ENCODE measurements at regions of chr3 and their contacts with region 1.

Region 1: DNA sequence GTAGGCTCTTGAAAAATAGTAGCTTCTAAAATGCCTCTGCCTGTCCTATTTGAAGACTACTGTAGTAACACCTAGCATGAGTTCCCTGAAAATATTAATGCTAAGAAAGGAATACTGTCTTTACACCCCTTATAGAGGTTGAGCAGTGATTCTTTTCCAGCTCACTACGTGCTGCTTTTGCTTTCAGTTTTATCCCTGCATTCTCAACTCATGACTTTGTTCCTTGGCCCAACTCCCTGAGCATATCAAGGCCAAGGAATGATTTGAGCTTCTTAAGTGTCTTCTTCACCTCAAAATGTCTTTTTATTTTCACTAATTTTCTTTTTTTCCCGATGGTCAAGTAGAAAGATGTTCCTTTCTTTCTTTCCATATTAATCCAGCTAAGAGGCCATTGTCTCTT is 16.5 kb upstream of the P2RY13 start:
- DNase-seq: no peak
- H3K4me3 ChIP-seq: peak overlapping the region in 1 of 2 experiments; percentile 23; a peak in 2 of 4 replicates
- H3K27ac ChIP-seq: no peak overlapping the region
- H3K4me1 ChIP-seq: peaks cover 0 to 2% of the 10 kb centered on the region in 2 experiments; a peak in 2 of 4 replicates
- H3K27me3 ChIP-seq: peaks cover 9% of the 10 kb centered on the region; the same call in 1 of the 2 replicates
- CTCF ChIP-seq: no peak
- EP300 ChIP-seq: no peak
- RAD21 ChIP-seq: no peak

Region 2: DNA sequence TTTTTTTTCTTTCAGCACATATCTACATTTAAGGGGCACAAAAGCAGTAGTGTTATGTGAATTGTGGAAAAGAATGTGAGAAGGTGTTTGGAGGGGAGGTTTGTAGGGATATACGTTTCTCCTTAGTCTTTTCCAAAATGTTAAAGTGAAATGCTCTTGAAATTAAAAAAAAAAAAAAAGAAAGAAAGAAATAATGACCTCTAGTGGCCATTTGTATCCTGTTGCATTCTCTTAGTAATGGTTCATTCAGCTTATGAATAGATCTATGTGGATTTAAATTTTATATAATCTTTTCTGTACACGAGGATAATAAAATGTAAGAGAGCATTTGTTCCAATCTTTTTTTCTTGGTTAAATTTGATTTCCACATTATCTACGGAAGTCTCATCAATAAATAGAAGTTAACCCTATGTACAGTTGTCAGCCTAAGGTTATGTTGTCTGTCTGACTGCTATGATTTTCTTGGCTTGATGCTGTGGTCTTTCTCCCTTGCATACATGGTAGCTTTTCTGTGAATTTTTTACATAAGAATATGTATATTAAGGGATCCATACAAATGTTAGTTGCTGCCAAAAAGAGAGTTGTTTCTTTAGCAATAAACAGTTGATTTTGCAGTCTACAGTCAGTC is 18.2 kb before region 1 on chr3:
- CTCF ChIA-PET with region 1: interaction called, 16 read pairs
- POLR2A ChIA-PET with region 1: no interaction called
- DNase-seq: peak; percentile 7
- H3K4me3 ChIP-seq: peak overlapping the region in 1 of 2 experiments; percentile 21; a peak in 1 of 4 replicates
- H3K27ac ChIP-seq: no peak overlapping the region
- H3K4me1 ChIP-seq: no peaks in the 10 kb centered on the region
- H3K27me3 ChIP-seq: peaks cover 6% of the 10 kb centered on the region; the same call in 1 of the 2 replicates
- CTCF ChIP-seq: peak; percentile 86
- EP300 ChIP-seq: no peak
- RAD21 ChIP-seq: peak; percentile 25

Region 3: GRCh38 chr3:151379083-151379734 is 33.4 kb after region 1 on chr3:
- CTCF ChIA-PET with region 1: no interaction called
- POLR2A ChIA-PET with region 1: no interaction called
- DNase-seq: peak; percentile 8
- H3K4me3 ChIP-seq: no peak overlapping the region; a peak in 1 of 4 replicates
- H3K27ac ChIP-seq: no peak overlapping the region
- H3K4me1 ChIP-seq: peaks cover 0 to 5% of the 10 kb centered on the region in 2 experiments; a peak in 1 of 4 replicates
- H3K27me3 ChIP-seq: no peaks in the 10 kb centered on the region; the same call in 1 of the 2 replicates
- CTCF ChIP-seq: peak; percentile 65
- EP300 ChIP-seq: no peak
- RAD21 ChIP-seq: peak; percentile 39